Dendritic cell treated with granulocyte-macrophage colony-stimulating factor and Interleukin-4, amounts not matched to agents 40 ng/mL and 50 ng/mL, for 4 days (primary cell): ENCODE measurements at regions of chr5 and their contacts with region 1.

Region 1: DNA sequence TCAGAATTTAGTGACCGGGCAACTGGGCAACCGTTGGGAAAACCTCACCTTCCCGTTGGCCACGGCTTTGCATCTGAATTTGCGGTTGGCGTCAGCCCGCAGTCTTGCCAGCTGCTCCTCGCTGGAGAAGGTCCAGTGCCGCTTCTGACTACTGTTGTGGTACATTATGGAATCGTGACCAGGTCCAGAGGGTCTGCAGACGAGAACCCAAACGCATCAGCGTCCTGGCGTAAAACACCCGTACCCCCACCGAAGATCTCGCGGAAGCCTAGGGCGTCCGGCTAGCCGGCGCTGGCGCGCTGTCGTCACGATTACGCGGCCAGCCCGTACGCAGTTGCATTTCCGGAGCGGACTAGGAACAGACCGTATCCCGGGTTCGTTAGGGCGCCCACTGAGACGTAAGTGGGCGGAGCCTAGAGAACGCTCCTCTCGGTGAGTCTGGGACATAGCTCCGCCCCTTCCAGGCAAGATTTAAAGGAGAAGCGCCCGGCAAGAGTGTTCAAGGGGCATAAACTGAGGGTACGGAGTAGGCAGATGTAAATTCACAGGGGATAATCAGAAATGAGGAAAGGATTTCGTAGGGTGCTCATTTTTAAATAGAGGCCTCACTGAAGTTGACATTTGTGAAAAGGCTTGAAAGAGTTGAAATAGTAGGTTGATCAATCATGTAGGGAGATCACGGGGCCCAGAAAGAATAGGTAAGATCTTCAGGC is at the start of gene CCNH:
- H3K4me3 Mint-ChIP-seq: peak within 1 kb of the TSS; percentile 97
- H3K27ac Mint-ChIP-seq: peak within 1 kb of the TSS; percentile 94
- H3K4me1 Mint-ChIP-seq: peaks cover 35% of the 10 kb centered on the region
- H3K27me3 Mint-ChIP-seq: peaks cover 3% of the 10 kb centered on the region

Region 2: GRCh38 chr5:86617756-86618576 is 794.8 kb before region 1 on chr5 and contains the start of gene COX7C:
- intact Hi-C with region 1: loop called (anchors 2 kb)
- H3K4me3 Mint-ChIP-seq: peak within 1 kb of the TSS; percentile 93
- H3K27ac Mint-ChIP-seq: peak within 1 kb of the TSS; percentile 96
- H3K4me1 Mint-ChIP-seq: peaks cover 5% of the 10 kb centered on the region
- H3K27me3 Mint-ChIP-seq: peaks cover 3% of the 10 kb centered on the region

Region 3: GRCh38 chr5:86968301-86968753 is 444.5 kb before region 1 on chr5:
- intact Hi-C with region 1: loop called (anchors 5 kb)
- H3K4me3 Mint-ChIP-seq: no peak overlapping the region
- H3K27ac Mint-ChIP-seq: no peak overlapping the region
- H3K4me1 Mint-ChIP-seq: peaks cover 30% of the 10 kb centered on the region
- H3K27me3 Mint-ChIP-seq: peaks cover 2% of the 10 kb centered on the region

Region 4: GRCh38 chr5:87015901-87016300 is 396.9 kb before region 1 on chr5:
- intact Hi-C with region 1: loop called (anchors 5 kb)
- H3K4me3 Mint-ChIP-seq: no peak overlapping the region
- H3K27ac Mint-ChIP-seq: peak overlapping the region; percentile 82
- H3K4me1 Mint-ChIP-seq: peaks cover 33% of the 10 kb centered on the region
- H3K27me3 Mint-ChIP-seq: no peaks in the 10 kb centered on the region

Region 5: GRCh38 chr5:87267574-87268125 is 145.1 kb before region 1 on chr5 and contains the start of gene RASA1:
- intact Hi-C with region 1: loop called (anchors 5 kb)
- H3K4me3 Mint-ChIP-seq: peak within 1 kb of the TSS; percentile 99
- H3K27ac Mint-ChIP-seq: peak within 1 kb of the TSS; percentile 97
- H3K4me1 Mint-ChIP-seq: peaks cover 31% of the 10 kb centered on the region
- H3K27me3 Mint-ChIP-seq: no peaks in the 10 kb centered on the region